Pancreas (tissue), 10 donors: ENCODE measurements at regions of chr9 and their contacts with region 1.

Region 1: DNA sequence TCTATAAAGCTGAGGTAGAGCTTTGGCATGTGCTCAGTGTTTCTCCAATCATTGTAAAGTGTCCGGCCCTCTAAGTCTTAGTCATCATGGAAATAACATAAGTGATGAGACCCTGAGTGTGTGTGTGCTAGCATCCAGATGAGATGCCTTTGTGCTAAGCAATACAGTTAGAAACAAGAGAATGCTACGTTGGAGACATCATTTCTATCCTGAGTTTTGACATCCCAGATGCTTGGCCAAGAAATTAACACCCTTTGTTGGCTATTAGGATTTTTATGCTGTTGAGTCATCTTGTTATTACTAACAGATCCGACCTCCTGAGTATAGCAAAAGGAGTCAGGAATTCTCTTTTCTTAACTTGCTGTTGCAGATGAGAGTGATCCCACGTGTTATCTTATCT is 508.0 kb downstream of the GADD45G start:
- DNase-seq: no peak
- ATAC-seq: no peak
- H3K4me3 ChIP-seq: no peak overlapping the region
- H3K27ac ChIP-seq: no peak overlapping the region
- H3K4me1 ChIP-seq: peaks cover 0 to 5% (median 0%) of the 10 kb centered on the region in 3 donors
- H3K27me3 ChIP-seq: no peaks in the 10 kb centered on the region
- CTCF ChIP-seq: no peak

Region 2: DNA sequence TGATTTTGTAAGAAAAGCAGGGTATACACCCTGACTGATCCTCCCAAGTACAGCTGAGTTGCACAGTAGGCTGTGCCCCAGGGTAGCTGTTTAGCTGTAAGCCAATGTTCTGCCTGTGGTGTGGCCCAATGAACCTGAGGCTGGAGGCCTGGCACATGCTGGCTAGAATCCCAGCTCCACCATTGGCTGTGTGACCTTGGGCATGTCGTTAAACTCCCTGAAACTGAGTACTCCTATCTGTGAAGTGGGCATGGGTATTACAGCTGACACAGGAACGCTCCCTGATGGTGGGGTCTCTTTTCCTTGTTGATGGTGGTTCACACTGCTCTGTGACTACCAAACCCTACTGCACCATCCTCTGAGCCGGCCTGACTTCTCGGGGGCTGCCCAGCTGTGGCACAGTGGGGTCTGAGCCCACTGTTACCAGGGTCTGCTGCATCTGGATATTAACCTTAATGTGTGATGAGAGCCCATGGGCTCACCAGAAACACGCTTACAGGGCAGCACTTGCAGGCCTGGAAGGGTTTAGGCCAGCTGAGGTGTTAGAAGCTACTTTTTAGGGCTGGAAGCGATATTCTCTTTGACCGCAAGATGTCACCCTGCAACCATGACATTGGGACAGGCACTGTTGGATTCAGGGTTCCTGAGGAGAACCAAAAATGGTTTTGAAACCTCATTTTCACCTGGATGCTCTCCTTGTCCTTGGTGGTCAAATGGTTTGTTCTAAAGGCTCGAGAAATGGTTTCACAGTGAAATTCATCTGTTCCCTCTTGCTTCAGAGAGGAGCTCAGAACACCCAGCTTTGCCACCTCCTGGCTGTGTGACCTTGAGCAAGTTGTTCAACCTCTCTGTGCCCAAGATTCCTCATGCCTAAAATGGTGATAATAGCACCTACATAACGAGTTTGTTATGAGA is 514.8 kb before region 1 on chr9:
- intact Hi-C with region 1: loop called in 1 of 3 experiments (anchors 10 kb)
- DNase-seq: peak in 2 of 6 donors; percentile 45 to 78
- ATAC-seq: peak; percentile 52 to 78 (median 75)
- H3K4me3 ChIP-seq: no peak overlapping the region
- H3K27ac ChIP-seq: no peak overlapping the region
- H3K4me1 ChIP-seq: no peaks in the 10 kb centered on the region
- H3K27me3 ChIP-seq: no peaks in the 10 kb centered on the region
- CTCF ChIP-seq: peak; percentile 37 to 67 (median 62)

Region 3: DNA sequence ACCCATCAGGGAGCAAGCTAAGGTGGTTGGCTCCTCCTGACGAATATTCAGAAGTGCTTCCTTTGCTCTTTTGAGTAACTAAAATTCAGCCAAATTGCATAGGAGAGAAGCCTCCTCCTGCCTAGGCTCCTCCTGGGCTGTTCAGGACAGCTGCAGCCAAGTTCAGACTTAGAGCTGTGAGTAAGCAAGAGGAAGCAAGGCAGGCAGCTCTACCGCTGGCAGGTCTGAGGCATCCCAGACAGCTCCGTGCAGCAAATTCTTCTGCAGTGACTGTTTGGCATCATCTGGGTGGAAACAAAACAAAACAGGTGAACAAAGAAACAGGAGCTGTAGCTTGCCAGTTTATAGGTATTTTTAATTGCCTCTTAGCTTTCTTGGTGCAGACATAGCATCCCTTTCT is 87.0 kb before region 1 on chr9:
- intact Hi-C with region 1: no loop called
- DNase-seq: no peak
- ATAC-seq: peak in 2 of 4 donors; percentile 34 to 43
- H3K4me3 ChIP-seq: no peak overlapping the region
- H3K27ac ChIP-seq: no peak overlapping the region
- H3K4me1 ChIP-seq: no peaks in the 10 kb centered on the region
- H3K27me3 ChIP-seq: no peaks in the 10 kb centered on the region
- CTCF ChIP-seq: no peak